Gastrocnemius medialis (tissue), 4 donors: ENCODE measurements at regions of chr22 and their contacts with region 1.

Region 1: GRCh38 chr22:39319270-39320022 is at the start of gene RPL3:
- DNase-seq: peak; percentile 93 to 96
- ATAC-seq: peak; percentile 84 to 87
- H3K4me3 ChIP-seq: peak within 1 kb of the TSS; percentile 65 to 91 (median 84)
- H3K27ac ChIP-seq: peak within 1 kb of the TSS; percentile 86 to 98 (median 91)
- H3K4me1 ChIP-seq: peaks cover 42 to 44% of the 10 kb centered on the region in 2 donors
- H3K27me3 ChIP-seq: no peaks in the 10 kb centered on the region
- CTCF ChIP-seq: peak in 2 of 5 experiments; percentile 37 to 46
- POLR2A ChIP-seq: peak; percentile 94 to 96
- total RNA-seq, gene RPL3: 261 to 680 (median 391) TPM

Region 2: DNA sequence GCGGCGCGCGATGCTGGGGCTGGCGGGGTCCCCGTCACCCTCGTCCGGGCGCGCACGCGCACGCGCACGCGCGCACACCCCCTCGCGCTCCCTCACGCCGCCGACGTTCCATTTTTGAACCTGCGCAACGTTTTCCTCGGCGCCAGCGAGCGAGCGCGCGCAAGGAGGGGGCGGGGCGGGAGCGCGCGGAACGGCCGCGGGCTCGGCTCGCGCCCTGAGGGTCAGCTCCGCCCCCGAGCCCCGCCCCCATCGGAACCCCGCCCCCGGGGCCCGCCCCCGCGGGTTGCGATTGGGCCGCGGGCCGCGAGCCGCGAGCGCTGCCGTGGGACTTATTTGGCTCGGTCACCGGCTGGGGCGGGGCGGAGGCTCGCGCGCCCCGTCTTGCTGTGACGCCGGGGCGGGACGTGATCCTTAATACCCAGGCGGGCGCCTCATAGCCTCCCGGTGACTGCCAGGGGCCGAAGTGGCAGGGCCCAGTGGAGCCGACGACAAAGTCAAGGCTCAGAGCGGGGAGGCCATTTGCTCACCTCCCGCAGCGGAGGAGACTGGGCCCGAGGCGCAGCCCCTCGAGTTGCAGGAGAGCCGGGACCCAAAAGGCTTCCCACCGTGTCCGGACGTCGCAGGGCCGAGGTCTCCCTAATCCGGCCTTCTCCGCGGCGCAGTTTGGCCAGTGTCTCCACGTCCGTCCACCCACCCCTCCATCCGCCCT is 166.8 kb before region 1 on chr22 and contains the start of gene CBX7:
- in situ Hi-C with region 1: no loop called
- intact Hi-C with region 1: loop called (anchors 1 kb)
- DNase-seq: peak; percentile 90 to 95
- ATAC-seq: peak; percentile 79 to 87
- H3K4me3 ChIP-seq: peak within 1 kb of the TSS; percentile 85 to 98 (median 97)
- H3K27ac ChIP-seq: peak within 1 kb of the TSS; percentile 94 to 99 (median 98)
- H3K4me1 ChIP-seq: peaks cover 29 to 31% of the 10 kb centered on the region in 2 donors
- H3K27me3 ChIP-seq: no peaks in the 10 kb centered on the region
- CTCF ChIP-seq: no peak
- POLR2A ChIP-seq: peak; percentile 87 to 96
- total RNA-seq, gene CBX7: 52.4 to 78.1 (median 62.3) TPM

Region 3: GRCh38 chr22:39236321-39237317 is 82.8 kb before region 1 on chr22:
- in situ Hi-C with region 1: loop called in 1 of 4 experiments (anchors 5 kb)
- intact Hi-C with region 1: loop called (anchors 2 kb)
- DNase-seq: peak; percentile 89 to 95
- ATAC-seq: peak; percentile 57 to 67
- H3K4me3 ChIP-seq: peak overlapping the region in 2 of 4 donors; percentile 0 to 3
- H3K27ac ChIP-seq: peak overlapping the region; percentile 91 to 97 (median 92)
- H3K4me1 ChIP-seq: peaks cover 77 to 90% of the 10 kb centered on the region in 2 donors
- H3K27me3 ChIP-seq: no peaks in the 10 kb centered on the region
- CTCF ChIP-seq: no peak
- POLR2A ChIP-seq: no peak

Region 4: DNA sequence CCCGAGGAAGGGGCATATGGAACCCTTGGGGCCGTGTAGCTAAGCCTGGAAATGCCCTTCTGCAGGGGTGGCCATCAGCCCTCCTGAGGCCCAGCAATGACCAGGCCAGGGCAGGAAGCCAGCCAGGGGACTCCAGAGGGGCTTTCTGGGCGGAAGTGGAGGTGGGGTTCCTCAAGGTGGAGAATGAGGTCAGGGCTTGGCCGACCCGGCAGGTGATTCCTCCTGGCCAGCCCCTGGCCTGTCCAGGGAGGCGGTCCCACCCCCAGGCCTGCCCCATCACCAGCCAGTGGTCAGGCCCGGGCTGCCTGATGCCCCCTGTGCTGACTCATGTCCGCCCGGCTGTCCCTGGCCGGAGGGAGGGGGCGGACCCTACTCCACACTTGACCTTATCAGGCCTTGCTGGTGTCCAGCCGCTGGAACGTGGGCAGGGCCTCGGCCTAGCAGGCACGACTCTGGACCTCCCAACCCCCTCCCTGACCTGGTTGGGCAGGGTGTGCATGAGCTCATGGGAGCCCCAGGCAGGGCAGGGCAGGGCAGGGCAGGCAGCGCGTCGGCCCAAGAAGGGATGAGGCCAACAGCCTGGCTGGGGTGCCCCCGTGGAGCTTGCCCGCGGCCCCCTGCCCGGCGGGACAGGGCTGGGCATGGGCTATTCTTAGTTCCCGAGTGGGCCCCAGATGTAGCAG is 36.0 kb before region 1 on chr22:
- in situ Hi-C with region 1: no loop called
- intact Hi-C with region 1: loop called (anchors 2 kb)
- DNase-seq: peak; percentile 80 to 94
- ATAC-seq: peak; percentile 69 to 77
- H3K4me3 ChIP-seq: no peak overlapping the region
- H3K27ac ChIP-seq: peak overlapping the region; percentile 86 to 92 (median 90)
- H3K4me1 ChIP-seq: peaks cover 19 to 22% of the 10 kb centered on the region in 2 donors
- H3K27me3 ChIP-seq: no peaks in the 10 kb centered on the region
- CTCF ChIP-seq: no peak
- POLR2A ChIP-seq: peak in 1 of 2 donors; percentile 35

Region 5: DNA sequence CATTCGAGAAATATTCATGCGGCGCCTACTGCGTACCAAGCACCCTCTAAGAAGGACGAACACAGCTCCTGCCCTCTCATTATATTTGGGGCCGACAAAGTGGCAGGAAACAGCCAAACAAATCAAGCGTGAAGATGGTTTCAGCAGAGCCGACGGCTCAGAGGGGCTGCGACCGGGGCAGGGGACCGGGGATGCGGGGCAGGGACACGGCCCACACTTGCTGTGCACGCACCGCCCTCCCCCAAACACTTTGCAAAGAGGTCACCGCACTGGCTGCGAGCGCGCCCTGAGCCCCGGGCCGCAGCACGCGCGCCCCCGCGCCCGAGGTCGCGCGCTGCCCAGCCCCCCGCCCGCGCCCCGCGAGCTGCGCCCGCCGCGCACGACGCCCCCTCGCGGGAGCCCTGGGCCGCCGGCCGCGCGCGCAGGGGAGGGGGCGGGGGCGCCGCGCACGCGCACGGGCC is 30.1 kb after region 1 on chr22:
- in situ Hi-C with region 1: no loop called
- intact Hi-C with region 1: loop called (anchors 1 kb)
- DNase-seq: no peak
- ATAC-seq: peak; percentile 77
- H3K4me3 ChIP-seq: peak overlapping the region; percentile 69 to 86 (median 78)
- H3K27ac ChIP-seq: peak overlapping the region; percentile 72 to 81 (median 76)
- H3K4me1 ChIP-seq: peaks cover 9 to 12% of the 10 kb centered on the region in 2 donors
- H3K27me3 ChIP-seq: no peaks in the 10 kb centered on the region
- CTCF ChIP-seq: no peak
- POLR2A ChIP-seq: no peak

Region 6: GRCh38 chr22:39490135-39490798 is 170.8 kb after region 1 on chr22:
- in situ Hi-C with region 1: no loop called
- intact Hi-C with region 1: no loop called
- DNase-seq: peak; percentile 71 to 82
- ATAC-seq: peak; percentile 97
- H3K4me3 ChIP-seq: no peak overlapping the region
- H3K27ac ChIP-seq: no peak overlapping the region
- H3K4me1 ChIP-seq: no peaks in the 10 kb centered on the region
- H3K27me3 ChIP-seq: no peaks in the 10 kb centered on the region
- CTCF ChIP-seq: no peak
- POLR2A ChIP-seq: no peak

Region 7: DNA sequence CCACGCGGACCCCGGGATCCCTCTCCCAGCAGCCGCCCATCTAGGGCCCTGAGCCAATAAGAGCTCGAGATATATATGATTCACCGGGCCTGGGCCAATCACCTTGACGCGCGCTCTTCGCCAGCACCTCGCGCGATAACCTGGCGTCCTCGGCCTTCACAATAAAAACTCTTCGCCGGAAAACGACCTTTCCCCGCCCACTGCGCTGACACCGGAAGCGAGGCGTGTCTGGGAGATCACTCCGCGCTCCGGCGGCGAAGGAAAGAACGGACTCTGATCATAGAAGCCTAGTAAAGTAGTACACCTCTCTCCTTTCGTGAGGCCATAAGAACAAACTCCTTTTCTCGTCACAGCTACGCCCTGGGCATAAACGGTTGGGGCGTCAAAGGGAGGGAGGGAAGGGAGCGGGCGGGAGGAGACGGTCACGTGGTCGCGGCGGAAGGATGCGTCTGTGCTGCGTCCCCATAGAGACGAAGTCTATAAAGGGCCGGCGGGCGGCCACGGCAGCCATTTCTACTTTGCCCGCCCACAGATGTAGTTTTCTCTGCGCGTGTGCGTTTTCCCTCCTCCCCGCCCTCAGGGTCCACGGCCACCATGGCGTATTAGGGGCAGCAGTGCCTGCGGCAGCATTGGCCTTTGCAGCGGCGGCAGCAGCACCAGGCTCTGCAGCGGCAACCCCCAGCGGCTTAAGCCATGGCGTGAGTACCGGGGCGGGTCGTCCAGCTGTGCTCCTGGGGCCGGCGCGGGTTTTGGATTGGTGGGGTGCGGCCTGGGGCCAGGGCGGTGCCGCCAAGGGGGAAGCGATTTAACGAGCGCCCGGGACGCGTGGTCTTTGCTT is 200.8 kb after region 1 on chr22 and contains the start of gene ATF4:
- in situ Hi-C with region 1: loop called in 1 of 4 experiments (anchors 25 kb)
- intact Hi-C with region 1: loop called (anchors 2 kb)
- DNase-seq: peak; percentile 97 to 99
- ATAC-seq: peak; percentile 77 to 86
- H3K4me3 ChIP-seq: peak within 1 kb of the TSS; percentile 88 to 100 (median 99)
- H3K27ac ChIP-seq: peak within 1 kb of the TSS; percentile 95 to 100 (median 100)
- H3K4me1 ChIP-seq: peaks cover 50 to 53% of the 10 kb centered on the region in 2 donors
- H3K27me3 ChIP-seq: no peaks in the 10 kb centered on the region
- CTCF ChIP-seq: peak in 2 of 5 experiments; percentile 13 to 33
- POLR2A ChIP-seq: peak; percentile 98
- total RNA-seq, gene ATF4: 480 to 666 (median 533) TPM